B cell (primary cell): ENCODE measurements at regions of chr16 and their contacts with region 1.

Region 1: GRCh38 chr16:2968738-2969544 is at the start of gene PAQR4:
- DNase-seq: peak; percentile 92
- ATAC-seq: peak; percentile 81
- H3K4me3 ChIP-seq: peak within 1 kb of the TSS; percentile 31 to 64 (median 58)
- H3K4me3 Mint-ChIP-seq: peak within 1 kb of the TSS; percentile 87
- H3K27ac ChIP-seq: no peak within 1 kb of the TSS
- H3K27ac Mint-ChIP-seq: peak within 1 kb of the TSS; percentile 73
- H3K4me1 ChIP-seq: peaks cover 53 to 56% of the 10 kb centered on the region in 2 donors
- H3K4me1 Mint-ChIP-seq: peaks cover 24% of the 10 kb centered on the region
- H3K27me3 ChIP-seq: peaks cover 0 to 51% (median 14%) of the 10 kb centered on the region in 4 experiments
- H3K27me3 Mint-ChIP-seq: peaks cover 16% of the 10 kb centered on the region
- CTCF ChIP-seq: no peak
- total RNA-seq, gene PAQR4: 1.8 and 2.6 TPM in 2 replicates

Region 2: DNA sequence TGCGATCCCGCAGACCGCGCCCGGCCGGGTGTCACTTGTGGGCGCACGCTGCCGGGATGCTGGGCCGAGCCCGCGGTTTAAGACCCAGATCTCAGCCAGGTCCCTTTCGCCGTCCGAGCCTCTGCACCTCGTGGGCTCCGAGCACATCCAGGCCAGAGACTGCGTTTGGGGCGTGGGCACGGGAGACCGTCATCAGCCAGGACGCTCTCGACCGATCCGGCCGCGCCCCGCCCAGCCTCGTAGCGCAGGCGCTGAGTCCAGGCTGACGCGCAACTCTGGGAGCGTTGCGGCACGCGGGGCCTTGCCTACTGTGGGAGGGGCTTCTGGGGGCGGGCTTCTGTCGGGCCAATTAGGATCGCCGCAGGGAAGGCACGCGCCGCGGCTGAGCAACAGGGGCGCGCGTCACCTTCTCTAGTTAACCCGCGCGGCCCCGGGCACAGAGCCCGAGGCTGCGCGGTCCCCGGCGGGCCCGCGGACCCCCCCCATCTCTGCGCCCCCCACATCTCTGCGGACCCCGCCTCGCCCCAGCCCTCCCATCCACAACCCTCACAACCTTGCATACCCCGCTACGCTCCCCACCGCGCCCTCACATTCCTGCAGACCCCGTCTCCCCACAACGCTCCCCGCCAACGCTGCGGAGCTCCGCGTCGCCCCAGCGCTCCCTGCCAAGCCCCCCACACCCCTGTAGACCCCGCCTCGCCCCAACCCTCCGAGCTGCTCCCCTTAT is 437.0 kb before region 1 on chr16:
- CTCF ChIA-PET with region 1: no interaction called
- POLR2A ChIA-PET with region 1: interaction called, 10 read pairs
- intact Hi-C with region 1: no loop called
- DNase-seq: peak; percentile 98
- ATAC-seq: peak; percentile 93
- H3K4me3 ChIP-seq: peak overlapping the region in 4 of 5 experiments; percentile 80 to 93 (median 88)
- H3K4me3 Mint-ChIP-seq: peak overlapping the region; percentile 94
- H3K27ac ChIP-seq: peak overlapping the region; percentile 96 to 100
- H3K27ac Mint-ChIP-seq: peak overlapping the region; percentile 97
- H3K4me1 ChIP-seq: peaks cover 8 to 26% of the 10 kb centered on the region in 2 donors
- H3K4me1 Mint-ChIP-seq: peaks cover 21% of the 10 kb centered on the region
- H3K27me3 ChIP-seq: no peaks in the 10 kb centered on the region
- H3K27me3 Mint-ChIP-seq: no peaks in the 10 kb centered on the region
- CTCF ChIP-seq: no peak

Region 3: GRCh38 chr16:2905431-2906387 is 63.2 kb before region 1 on chr16:
- CTCF ChIA-PET with region 1: no interaction called
- POLR2A ChIA-PET with region 1: no interaction called
- intact Hi-C with region 1: loop called (anchors 2 kb)
- DNase-seq: peak; percentile 95
- ATAC-seq: peak; percentile 75
- H3K4me3 ChIP-seq: peak overlapping the region; percentile 21 to 85 (median 74)
- H3K4me3 Mint-ChIP-seq: peak overlapping the region; percentile 93
- H3K27ac ChIP-seq: peak overlapping the region in 1 of 2 donors; percentile 22
- H3K27ac Mint-ChIP-seq: peak overlapping the region; percentile 84
- H3K4me1 ChIP-seq: peaks cover 10 to 28% of the 10 kb centered on the region in 2 donors
- H3K4me1 Mint-ChIP-seq: peaks cover 33% of the 10 kb centered on the region
- H3K27me3 ChIP-seq: no peaks in the 10 kb centered on the region
- H3K27me3 Mint-ChIP-seq: no peaks in the 10 kb centered on the region
- CTCF ChIP-seq: no peak

Region 4: DNA sequence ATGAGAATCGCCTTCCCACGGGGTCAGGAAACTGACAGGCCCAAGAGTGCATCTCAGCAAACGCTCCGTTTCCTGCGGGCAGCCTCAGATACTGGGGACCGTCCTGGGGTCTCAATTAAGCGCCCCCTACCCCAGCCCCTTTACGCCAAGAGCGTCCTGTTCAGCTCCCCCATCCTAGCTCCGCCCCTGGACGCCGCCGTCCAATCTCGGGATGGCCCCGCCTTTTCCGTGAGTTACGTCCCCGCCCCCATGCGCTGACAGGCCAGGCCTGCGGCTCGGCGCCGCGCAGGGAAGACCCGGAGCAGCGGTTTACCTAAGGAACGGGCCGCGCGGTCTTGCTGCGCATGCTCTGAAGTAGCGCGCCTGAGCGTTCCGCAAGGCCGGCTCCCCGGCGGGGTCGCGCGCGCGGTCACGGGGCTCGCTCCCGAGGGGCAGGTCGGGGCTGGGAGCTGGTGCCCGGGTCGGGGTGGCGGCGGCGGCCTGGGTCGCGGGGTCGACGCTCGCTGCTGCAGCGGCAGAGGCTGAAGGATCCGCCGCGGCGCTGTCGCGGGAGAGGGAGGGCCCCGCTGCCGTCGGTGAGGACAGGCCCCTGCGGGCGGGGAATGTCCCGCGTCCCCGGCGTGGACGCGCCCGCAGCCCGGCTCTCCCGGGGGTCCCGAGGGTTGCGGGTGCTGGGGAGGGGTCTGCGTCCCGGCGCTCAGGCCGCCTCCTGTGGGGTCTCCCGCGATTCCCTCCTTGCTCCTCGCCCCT is 57.2 kb before region 1 on chr16 and contains the start of gene FLYWCH1:
- CTCF ChIA-PET with region 1: no interaction called
- POLR2A ChIA-PET with region 1: no interaction called
- intact Hi-C with region 1: loop called (anchors 2 kb)
- DNase-seq: peak; percentile 98
- ATAC-seq: peak; percentile 99
- H3K4me3 ChIP-seq: peak within 1 kb of the TSS; percentile 50 to 77 (median 70)
- H3K4me3 Mint-ChIP-seq: peak within 1 kb of the TSS; percentile 96
- H3K27ac ChIP-seq: peak within 1 kb of the TSS; percentile 38 to 66
- H3K27ac Mint-ChIP-seq: peak within 1 kb of the TSS; percentile 92
- H3K4me1 ChIP-seq: peaks cover 11 to 18% of the 10 kb centered on the region in 2 donors
- H3K4me1 Mint-ChIP-seq: peaks cover 29% of the 10 kb centered on the region
- H3K27me3 ChIP-seq: no peaks in the 10 kb centered on the region
- H3K27me3 Mint-ChIP-seq: no peaks in the 10 kb centered on the region
- CTCF ChIP-seq: no peak
- total RNA-seq, gene FLYWCH1: 119 and 120 TPM in 2 replicates

Region 5: GRCh38 chr16:2980227-2981086 is 11.5 kb after region 1 on chr16 and contains the start of gene PKMYT1:
- CTCF ChIA-PET with region 1: interaction called, 7 read pairs
- POLR2A ChIA-PET with region 1: interaction called, 10 read pairs
- intact Hi-C with region 1: loop called (anchors 1 kb)
- DNase-seq: peak; percentile 96
- ATAC-seq: peak; percentile 93
- H3K4me3 ChIP-seq: peak within 1 kb of the TSS; percentile 57 to 96 (median 82)
- H3K4me3 Mint-ChIP-seq: peak within 1 kb of the TSS; percentile 81
- H3K27ac ChIP-seq: peak within 1 kb of the TSS; percentile 71 to 83
- H3K27ac Mint-ChIP-seq: peak within 1 kb of the TSS; percentile 84
- H3K4me1 ChIP-seq: peaks cover 18 to 39% of the 10 kb centered on the region in 2 donors
- H3K4me1 Mint-ChIP-seq: peaks cover 21% of the 10 kb centered on the region
- H3K27me3 ChIP-seq: peaks cover 0 to 8% (median 1%) of the 10 kb centered on the region in 4 experiments
- H3K27me3 Mint-ChIP-seq: no peaks in the 10 kb centered on the region
- CTCF ChIP-seq: no peak
- total RNA-seq, gene PKMYT1: 0.67 and 1.0 TPM in 2 replicates

Region 6: DNA sequence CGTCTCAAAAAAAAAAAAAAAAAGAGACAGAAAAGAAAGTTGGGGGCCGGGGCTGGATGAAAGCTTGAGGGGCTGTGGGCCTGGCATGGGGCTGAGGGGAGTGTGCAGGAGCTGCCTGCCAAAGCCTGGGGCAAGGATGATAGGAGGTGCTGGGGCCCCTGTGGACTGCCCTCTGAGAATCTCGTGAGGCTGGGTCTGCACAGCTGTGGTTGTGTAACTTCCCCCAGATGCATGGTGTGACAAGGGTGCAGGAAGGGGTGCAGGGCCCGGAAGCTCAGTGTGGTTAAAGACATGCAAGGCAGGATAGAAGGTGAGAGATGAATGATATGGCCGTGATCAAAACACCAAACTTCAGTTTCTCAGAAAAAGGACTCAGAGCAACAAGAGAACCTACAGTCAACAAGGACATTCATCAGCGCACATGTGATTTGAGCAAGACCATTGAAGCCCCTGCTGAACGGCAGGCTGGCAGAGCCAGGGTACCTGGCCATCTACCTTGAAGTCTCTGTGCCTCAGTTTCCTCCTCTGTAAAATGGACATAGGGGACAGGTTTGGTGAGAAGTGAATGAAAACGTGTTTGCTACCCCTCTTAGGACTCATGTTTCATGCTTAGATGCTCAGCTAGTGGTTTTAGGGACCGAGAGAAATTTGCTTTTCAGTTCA is 106.0 kb after region 1 on chr16:
- CTCF ChIA-PET with region 1: no interaction called
- POLR2A ChIA-PET with region 1: no interaction called
- intact Hi-C with region 1: no loop called
- DNase-seq: peak; percentile 65
- ATAC-seq: peak; percentile 88
- H3K4me3 ChIP-seq: peak overlapping the region in 4 of 5 experiments; percentile 2 to 29 (median 12)
- H3K4me3 Mint-ChIP-seq: peak overlapping the region; percentile 77
- H3K27ac ChIP-seq: peak overlapping the region; percentile 32 to 74
- H3K27ac Mint-ChIP-seq: peak overlapping the region; percentile 89
- H3K4me1 ChIP-seq: peaks cover 39 to 41% of the 10 kb centered on the region in 2 donors
- H3K4me1 Mint-ChIP-seq: peaks cover 55% of the 10 kb centered on the region
- H3K27me3 ChIP-seq: no peaks in the 10 kb centered on the region
- H3K27me3 Mint-ChIP-seq: no peaks in the 10 kb centered on the region
- CTCF ChIP-seq: no peak

Region 7: GRCh38 chr16:3214904-3215600 is 246.1 kb after region 1 on chr16:
- CTCF ChIA-PET with region 1: no interaction called
- POLR2A ChIA-PET with region 1: no interaction called
- intact Hi-C with region 1: no loop called
- DNase-seq: no peak
- ATAC-seq: peak; percentile 14
- H3K4me3 ChIP-seq: no peak overlapping the region
- H3K4me3 Mint-ChIP-seq: peak overlapping the region; percentile 13
- H3K27ac ChIP-seq: peak overlapping the region in 1 of 2 donors; percentile 38
- H3K27ac Mint-ChIP-seq: no peak overlapping the region
- H3K4me1 ChIP-seq: peaks cover 14 to 16% of the 10 kb centered on the region in 2 donors
- H3K4me1 Mint-ChIP-seq: peaks cover 22% of the 10 kb centered on the region
- H3K27me3 ChIP-seq: peaks cover 0 to 3% (median 0%) of the 10 kb centered on the region in 4 experiments
- H3K27me3 Mint-ChIP-seq: peaks cover 12% of the 10 kb centered on the region
- CTCF ChIP-seq: no peak